Left cardiac atrium (tissue), 4 donors: ENCODE measurements at regions of chr22 and their contacts with region 1.

Region 1: DNA sequence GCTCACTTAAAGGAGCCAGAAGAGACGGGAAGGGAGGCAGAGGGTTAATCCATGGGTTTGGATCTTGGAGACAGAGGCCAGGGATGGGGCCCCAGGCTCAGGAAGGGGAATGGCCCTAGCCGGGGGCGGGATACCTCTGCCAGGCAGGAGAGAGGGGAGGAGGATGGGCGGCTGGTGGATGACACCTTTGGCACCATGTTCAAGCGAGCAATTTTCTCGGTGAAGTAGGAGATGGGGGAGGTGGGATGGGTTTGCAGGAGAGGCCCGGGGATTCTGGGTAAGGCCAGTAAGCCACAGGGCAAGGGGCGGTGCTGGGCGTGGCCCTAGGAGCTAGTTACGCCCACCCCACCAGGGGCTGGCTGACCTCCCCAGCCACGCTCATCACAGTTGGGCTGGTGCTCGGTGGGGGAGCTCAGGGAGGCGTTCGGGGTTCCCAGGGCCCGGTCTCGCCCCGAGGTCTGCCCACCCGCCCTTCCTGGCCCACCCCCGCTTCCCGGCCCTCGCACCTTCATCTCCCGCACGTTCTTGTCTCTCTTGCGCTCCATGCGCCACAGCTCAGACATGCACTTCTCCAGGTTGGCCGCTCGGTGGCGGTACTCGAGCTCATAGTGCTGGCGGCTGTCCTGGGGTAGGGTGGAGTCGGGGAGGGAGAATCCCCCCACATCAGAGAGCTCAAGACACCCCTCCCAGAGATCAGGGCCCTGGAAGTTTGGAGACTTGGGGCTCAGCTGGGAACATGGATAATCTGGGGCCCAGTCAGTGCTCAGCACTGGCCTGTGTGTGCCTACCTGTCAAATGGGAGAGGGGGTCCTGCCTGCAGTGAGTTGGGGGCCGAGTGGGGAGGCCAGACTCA is 12.7 kb downstream of the BAIAP2L2 start:
- DNase-seq: no peak
- ATAC-seq: peak in 1 of 2 donors; percentile 42

Region 2: DNA sequence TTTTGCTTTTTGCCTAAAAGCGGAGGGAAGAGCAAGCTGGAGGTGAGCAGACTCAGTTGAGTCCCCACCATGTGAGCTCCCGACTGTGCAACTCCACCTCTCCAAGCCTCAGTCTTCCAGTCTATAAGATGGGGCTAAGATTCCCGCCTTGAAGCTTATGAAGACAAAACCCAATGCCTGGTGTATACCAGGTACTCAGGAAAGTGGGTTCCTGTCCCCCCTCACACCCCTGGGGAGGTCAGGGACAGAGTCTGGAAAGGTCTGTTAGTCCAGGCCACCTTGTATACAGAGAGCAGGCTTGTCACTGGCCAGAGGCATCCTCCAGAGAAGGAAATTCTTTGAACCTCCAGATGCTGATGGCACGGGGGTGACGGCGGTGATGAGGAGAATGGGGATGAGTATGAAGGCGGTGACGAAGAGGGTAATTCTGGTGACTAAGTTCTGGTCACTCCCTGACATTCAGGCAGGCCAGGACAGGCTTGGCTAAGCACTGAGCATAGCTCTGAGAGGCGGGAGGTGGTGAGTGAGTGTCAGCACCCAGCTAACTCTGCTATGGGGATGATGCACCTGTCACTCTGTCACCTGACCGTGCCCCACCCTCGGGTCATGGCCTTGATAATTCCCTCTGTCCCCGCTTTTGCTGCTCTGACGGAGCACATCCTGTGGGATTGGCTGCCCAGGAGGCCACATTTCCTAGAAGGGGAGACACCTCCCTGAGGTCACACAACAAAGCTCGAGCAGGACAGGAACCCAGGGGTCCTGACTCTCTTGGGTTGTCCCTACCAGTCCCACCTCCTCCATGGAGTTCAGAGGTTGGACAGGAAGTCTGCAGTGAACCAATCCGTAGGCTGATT is 250.3 kb after region 1 on chr22:
- intact Hi-C with region 1: loop called in 1 of 2 experiments (anchors 10 kb)
- DNase-seq: no peak
- ATAC-seq: peak; percentile 36 to 54